Endothelial cell of umbilical vein (primary cell): ENCODE measurements at regions of chr16 and their contacts with region 1.

Region 1: DNA sequence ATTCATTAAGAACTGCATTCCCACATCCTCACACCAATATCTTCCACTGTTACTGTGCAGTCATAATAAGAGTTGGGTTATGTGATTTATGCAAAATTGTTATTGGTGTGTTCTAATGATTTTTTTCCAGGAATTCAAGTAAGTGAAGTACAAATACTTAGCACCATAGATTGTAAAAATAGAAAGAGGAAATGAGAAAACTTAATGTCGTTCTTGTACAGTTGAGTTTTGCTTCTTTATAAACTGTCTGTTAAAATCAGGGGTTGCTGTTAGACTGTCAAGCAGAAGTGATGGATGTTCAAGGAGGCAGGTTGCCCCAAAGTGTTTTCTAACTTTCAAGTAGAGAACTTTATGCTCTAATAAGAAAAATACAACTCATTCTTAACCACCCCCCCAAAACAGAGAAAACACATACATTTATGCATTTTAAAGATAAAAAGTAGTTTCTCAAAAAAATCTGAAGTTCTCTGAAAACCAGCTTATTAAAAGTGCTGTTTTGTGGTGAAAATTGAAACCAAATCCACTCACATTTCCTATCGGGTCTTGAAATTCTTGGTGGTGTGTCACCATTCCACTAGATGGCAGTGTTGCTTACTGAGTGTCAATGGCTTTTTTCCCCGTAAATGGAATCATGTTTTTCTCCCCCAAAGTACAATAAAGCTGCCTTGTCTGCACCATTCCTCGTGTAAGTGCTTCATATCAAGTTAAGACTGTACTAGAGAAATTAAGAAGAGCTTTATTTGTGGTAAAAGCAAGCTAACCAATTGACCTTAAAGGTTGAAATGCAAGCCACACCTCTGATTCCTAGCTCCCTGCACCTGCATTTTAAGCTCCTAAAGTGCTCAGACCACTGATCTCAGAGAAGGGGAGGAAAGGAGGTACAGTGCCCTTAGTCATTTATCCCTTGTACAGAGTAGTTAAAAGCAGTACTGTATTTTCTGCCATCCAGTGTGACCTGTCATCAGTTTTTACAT is 4.7 kb upstream of the IGSF6 start:
- DNase-seq: peak; percentile 63
- H3K4me3 ChIP-seq: no peak overlapping the region
- H3K27ac ChIP-seq: no peak overlapping the region
- H3K4me1 ChIP-seq: peaks cover 6% of the 10 kb centered on the region
- H3K27me3 ChIP-seq: no peaks in the 10 kb centered on the region
- CTCF ChIP-seq: peak; percentile 69 to 71
- POLR2A ChIP-seq: no peak

Region 2: GRCh38 chr16:21203155-21203797 is 453.8 kb before region 1 on chr16:
- CTCF ChIA-PET with region 1: no interaction called
- POLR2A ChIA-PET with region 1: no interaction called
- dilution Hi-C with region 1: no loop called
- intact Hi-C with region 1: no loop called
- DNase-seq: no peak
- H3K4me3 ChIP-seq: no peak overlapping the region
- H3K27ac ChIP-seq: no peak overlapping the region
- H3K4me1 ChIP-seq: no peaks in the 10 kb centered on the region
- H3K27me3 ChIP-seq: peaks cover 5% of the 10 kb centered on the region in 2 experiments
- CTCF ChIP-seq: no peak
- POLR2A ChIP-seq: no peak

Region 3: GRCh38 chr16:21584817-21585216 is 72.3 kb before region 1 on chr16:
- CTCF ChIA-PET with region 1: interaction called, 15 read pairs
- POLR2A ChIA-PET with region 1: no interaction called
- dilution Hi-C with region 1: no loop called
- intact Hi-C with region 1: loop called (anchors 1 kb)
- DNase-seq: no peak
- H3K4me3 ChIP-seq: no peak overlapping the region
- H3K27ac ChIP-seq: no peak overlapping the region
- H3K4me1 ChIP-seq: no peaks in the 10 kb centered on the region
- H3K27me3 ChIP-seq: peaks cover 0 to 3% of the 10 kb centered on the region in 2 experiments
- CTCF ChIP-seq: no peak
- POLR2A ChIP-seq: no peak

Region 4: DNA sequence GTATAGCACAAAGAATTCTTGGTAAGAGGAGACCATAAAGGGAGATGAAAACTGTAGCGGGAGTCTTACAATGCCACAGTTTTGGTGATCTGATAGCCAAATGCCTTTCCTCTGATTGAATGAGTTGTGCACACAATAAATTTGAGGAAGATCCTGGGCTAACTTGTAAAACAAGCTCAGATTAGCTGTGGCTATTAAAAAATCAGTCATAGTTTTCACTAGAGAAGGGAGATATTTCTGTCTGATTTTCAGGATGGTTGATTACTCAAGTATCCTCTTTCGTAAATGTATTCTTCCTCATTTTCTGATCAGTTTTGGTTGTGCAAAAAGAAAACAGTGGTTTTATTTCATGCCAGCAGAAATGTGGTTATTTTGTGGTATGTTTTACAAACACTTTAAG is 66.8 kb before region 1 on chr16:
- CTCF ChIA-PET with region 1: interaction called, 11 read pairs
- POLR2A ChIA-PET with region 1: no interaction called
- dilution Hi-C with region 1: no loop called
- intact Hi-C with region 1: no loop called
- DNase-seq: no peak
- H3K4me3 ChIP-seq: no peak overlapping the region
- H3K27ac ChIP-seq: no peak overlapping the region
- H3K4me1 ChIP-seq: no peaks in the 10 kb centered on the region
- H3K27me3 ChIP-seq: peaks cover 0 to 5% of the 10 kb centered on the region in 2 experiments
- CTCF ChIP-seq: no peak
- POLR2A ChIP-seq: no peak

Region 5: DNA sequence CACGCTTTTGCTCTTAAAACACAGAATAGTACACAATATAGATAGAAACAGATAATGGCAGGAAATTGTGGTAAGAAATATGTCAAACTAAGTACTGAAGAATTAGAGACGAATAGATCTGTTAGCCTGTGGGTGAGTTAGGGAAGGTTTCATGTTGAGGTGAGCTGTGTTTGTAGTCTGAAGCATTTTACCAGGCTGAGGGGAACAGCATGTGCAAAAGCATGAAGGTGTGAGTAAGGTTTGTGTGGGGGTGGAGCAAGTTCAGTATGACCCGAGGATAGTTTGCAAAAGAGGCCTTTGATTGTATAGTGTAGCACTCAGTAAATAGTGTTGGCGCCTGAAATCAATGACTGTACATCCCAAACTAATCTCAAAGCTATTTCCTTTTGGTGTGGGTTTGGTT is 18.5 kb before region 1 on chr16:
- CTCF ChIA-PET with region 1: interaction called, 18 read pairs
- POLR2A ChIA-PET with region 1: no interaction called
- dilution Hi-C with region 1: no loop called
- intact Hi-C with region 1: no loop called
- DNase-seq: no peak
- H3K4me3 ChIP-seq: no peak overlapping the region
- H3K27ac ChIP-seq: no peak overlapping the region
- H3K4me1 ChIP-seq: peaks cover 9% of the 10 kb centered on the region
- H3K27me3 ChIP-seq: no peaks in the 10 kb centered on the region
- CTCF ChIP-seq: no peak
- POLR2A ChIP-seq: no peak

Region 6: GRCh38 chr16:21646721-21647561 is 10.1 kb before region 1 on chr16:
- CTCF ChIA-PET with region 1: interaction called, 32 read pairs
- POLR2A ChIA-PET with region 1: no interaction called
- dilution Hi-C with region 1: no loop called
- intact Hi-C with region 1: no loop called
- DNase-seq: no peak
- H3K4me3 ChIP-seq: no peak overlapping the region
- H3K27ac ChIP-seq: no peak overlapping the region
- H3K4me1 ChIP-seq: peaks cover 11% of the 10 kb centered on the region
- H3K27me3 ChIP-seq: no peaks in the 10 kb centered on the region
- CTCF ChIP-seq: no peak
- POLR2A ChIP-seq: no peak

Region 7: GRCh38 chr16:21694609-21695008 is 37.5 kb after region 1 on chr16:
- CTCF ChIA-PET with region 1: interaction called, 13 read pairs
- POLR2A ChIA-PET with region 1: no interaction called
- dilution Hi-C with region 1: no loop called
- intact Hi-C with region 1: no loop called
- DNase-seq: no peak
- H3K4me3 ChIP-seq: no peak overlapping the region
- H3K27ac ChIP-seq: no peak overlapping the region
- H3K4me1 ChIP-seq: no peaks in the 10 kb centered on the region
- H3K27me3 ChIP-seq: no peaks in the 10 kb centered on the region
- CTCF ChIP-seq: no peak
- POLR2A ChIP-seq: no peak

Region 8: DNA sequence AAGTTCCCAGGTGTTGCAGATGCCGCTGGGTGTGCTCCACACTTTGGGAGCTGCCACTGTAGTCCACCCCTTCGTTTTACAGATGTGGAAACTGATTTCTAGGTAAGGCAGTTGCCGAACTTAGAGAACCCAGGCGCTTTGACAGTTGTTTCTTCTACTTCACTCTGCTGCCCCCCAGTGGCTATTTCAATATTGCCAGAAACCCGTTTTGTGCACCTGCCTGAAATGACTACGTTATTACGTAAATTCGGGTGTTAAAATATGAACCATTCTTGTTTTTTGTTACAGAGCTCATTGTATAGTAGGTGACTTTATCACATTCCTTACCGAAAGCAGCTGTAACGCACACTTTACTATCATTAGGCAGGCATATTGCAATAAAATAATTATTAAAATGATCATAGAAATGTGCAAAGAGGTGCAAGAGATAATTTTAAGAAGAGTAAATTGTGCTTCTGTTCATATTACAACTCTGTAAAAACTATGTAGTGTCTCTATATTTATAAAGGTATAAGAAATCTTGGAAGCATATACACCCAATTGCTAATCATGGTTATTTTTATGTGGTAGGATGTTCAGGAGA is 51.5 kb after region 1 on chr16:
- CTCF ChIA-PET with region 1: interaction called, 30 read pairs
- POLR2A ChIA-PET with region 1: no interaction called
- dilution Hi-C with region 1: no loop called
- intact Hi-C with region 1: loop called (anchors 1 kb)
- DNase-seq: peak; percentile 74
- H3K4me3 ChIP-seq: no peak overlapping the region
- H3K27ac ChIP-seq: no peak overlapping the region
- H3K4me1 ChIP-seq: no peaks in the 10 kb centered on the region
- H3K27me3 ChIP-seq: no peaks in the 10 kb centered on the region
- CTCF ChIP-seq: peak; percentile 73
- POLR2A ChIP-seq: no peak